GM10248 (cell line): ENCODE measurements at regions of chr19 and their contacts with region 1.

Region 1: GRCh38 chr19:18557474-18558201 is at the start of gene KXD1:
- DNase-seq: peak; percentile 98
- CTCF ChIP-seq: no peak

Region 2: DNA sequence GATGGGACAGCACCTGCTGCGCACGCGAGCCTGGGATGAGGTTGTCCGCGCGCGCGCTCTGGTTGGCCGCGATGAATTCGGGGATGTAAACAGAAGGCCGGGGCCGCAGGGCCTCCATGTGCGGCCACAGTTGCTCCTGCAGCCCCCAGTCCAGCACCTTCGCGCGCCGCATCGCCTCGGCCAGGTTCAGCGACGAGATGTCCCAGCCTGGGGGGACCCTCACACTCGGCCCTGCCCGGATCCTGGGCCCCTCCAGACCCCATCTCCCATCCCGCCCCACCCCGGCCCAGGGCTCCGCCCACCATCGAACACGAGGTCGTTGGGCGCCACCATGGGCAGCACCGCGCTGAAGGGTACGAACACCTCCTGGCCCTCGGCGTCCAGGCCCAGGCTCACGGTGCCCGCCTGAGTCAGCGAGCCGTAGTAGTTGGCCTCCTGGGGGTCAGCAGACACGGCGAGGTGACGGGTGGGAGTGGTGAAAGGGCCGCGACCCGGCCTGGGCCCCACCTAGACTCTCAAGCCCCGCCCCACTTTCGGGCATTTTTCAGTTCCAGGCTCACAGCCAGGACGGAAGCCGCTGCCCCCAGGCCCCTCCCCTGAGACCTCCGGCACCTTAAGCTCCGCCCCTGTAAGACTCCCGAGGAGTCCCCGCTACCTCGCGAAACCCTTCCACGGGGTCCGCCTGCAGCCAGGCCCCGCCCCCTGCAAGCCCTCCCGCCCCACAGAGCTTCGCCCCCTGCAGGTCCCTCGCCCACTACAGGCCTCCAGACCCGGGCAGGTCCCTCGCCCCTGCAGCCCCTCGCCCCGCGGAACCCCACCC is 120.8 kb before region 1 on chr19:
- CTCF ChIA-PET with region 1: no interaction called
- POLR2A ChIA-PET with region 1: no interaction called
- DNase-seq: peak; percentile 93
- CTCF ChIP-seq: no peak

Region 3: DNA sequence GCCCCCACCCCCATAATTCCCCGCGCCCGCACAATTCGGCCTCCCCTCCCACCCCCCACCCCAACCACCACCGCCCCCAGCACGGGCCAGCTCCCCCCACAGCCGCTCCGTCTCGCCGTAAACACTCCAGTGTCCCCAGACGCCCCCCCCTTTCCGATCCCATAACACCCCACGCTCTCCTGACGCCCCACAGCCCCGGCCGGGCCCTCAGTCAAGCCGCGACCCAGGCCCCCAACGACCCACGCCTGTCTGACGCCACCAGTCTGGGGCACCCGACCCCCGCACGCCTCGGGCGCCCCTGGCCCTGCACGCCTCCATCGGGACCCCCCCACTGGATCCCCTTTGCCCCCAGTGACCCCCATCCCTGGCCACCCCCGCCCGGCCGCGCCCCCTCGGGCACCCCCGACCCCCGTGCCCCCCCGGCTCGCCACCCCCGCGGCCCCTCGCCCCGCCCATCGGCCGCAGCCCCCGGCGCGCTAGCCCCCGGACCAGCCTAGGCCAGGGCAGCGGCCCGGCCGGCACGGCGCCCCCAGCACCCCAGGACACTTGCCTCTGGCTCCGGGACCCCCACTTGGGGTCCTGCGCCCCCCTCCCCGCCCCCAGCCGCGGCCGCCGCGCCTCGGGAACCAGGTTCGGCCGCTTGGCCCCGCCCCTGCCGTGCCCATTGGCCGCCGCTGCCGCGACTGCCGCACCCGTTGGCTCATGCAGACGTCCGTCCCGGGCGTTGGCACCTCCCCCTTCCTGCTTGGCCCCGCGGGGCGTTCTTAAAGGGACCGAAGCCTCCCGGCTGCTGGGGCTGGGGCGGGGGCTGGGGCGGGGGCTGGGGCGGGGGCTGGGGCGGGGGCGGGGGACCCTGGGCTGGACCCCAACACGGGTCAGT is 14.5 kb before region 1 on chr19 and contains the start of gene FKBP8:
- CTCF ChIA-PET with region 1: interaction called, 19 read pairs
- POLR2A ChIA-PET with region 1: interaction called, 14 read pairs
- DNase-seq: peak; percentile 98
- CTCF ChIP-seq: no peak

Region 4: GRCh38 chr19:18599485-18599884 is 41.8 kb after region 1 on chr19:
- CTCF ChIA-PET with region 1: no interaction called
- POLR2A ChIA-PET with region 1: no interaction called
- DNase-seq: no peak
- CTCF ChIP-seq: no peak

Region 5: DNA sequence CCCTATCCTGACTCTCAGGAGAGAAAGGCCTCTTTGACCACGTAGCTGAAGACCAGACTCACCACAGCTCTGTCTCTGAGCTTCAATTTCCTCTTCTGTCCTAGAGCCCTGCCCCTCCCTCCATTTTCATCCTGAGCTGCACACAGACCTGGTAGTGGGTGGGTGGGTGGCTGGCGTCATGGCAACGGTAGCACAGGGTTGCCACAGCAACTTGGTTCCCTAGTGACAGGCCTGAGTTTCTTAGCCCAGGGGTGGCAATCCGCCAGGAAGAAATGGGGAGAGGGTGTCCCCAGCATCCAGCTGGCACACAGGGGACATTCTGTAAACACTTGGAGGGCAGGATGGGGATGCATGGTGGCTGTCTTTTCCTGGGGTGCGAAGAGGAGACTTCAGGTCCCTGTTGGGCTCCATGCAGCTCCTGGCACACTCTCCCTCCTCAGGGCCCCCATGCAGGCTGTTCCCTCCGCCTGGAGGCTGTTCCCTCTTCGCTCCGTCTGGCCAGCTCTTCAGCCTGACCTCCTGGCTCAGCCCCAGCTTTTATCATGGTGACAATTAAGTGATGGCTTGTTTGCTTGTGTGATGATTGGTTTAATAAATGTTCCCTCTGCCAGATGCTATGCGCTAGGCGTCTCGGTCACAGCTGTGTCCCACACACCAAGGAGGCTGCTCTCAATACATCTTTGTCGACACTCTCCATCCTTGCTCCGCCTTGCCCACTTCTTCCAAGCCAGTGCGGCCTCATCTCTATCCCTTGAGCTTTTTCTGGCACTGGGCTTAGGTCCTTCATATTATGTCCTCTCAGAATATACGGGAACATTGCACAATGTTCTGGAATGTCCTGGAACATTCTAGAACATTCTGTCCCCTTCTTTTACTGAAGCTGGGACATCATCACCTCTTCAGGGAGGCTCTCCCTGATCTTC is 71.8 kb after region 1 on chr19:
- CTCF ChIA-PET with region 1: no interaction called
- POLR2A ChIA-PET with region 1: no interaction called
- DNase-seq: no peak
- CTCF ChIP-seq: no peak